Dendritic cell treated with granulocyte-macrophage colony-stimulating factor and Interleukin-4, amounts not matched to agents 40 ng/mL and 50 ng/mL, for 4 days (primary cell): ENCODE measurements at regions of chr1 and their contacts with region 1.

Region 1: GRCh38 chr1:108691942-108692723 is at the start of gene PRPF38B:
- H3K4me3 Mint-ChIP-seq: peak within 1 kb of the TSS; percentile 96
- H3K27ac Mint-ChIP-seq: peak within 1 kb of the TSS; percentile 100
- H3K4me1 Mint-ChIP-seq: peaks cover 21% of the 10 kb centered on the region
- H3K27me3 Mint-ChIP-seq: no peaks in the 10 kb centered on the region

Region 2: DNA sequence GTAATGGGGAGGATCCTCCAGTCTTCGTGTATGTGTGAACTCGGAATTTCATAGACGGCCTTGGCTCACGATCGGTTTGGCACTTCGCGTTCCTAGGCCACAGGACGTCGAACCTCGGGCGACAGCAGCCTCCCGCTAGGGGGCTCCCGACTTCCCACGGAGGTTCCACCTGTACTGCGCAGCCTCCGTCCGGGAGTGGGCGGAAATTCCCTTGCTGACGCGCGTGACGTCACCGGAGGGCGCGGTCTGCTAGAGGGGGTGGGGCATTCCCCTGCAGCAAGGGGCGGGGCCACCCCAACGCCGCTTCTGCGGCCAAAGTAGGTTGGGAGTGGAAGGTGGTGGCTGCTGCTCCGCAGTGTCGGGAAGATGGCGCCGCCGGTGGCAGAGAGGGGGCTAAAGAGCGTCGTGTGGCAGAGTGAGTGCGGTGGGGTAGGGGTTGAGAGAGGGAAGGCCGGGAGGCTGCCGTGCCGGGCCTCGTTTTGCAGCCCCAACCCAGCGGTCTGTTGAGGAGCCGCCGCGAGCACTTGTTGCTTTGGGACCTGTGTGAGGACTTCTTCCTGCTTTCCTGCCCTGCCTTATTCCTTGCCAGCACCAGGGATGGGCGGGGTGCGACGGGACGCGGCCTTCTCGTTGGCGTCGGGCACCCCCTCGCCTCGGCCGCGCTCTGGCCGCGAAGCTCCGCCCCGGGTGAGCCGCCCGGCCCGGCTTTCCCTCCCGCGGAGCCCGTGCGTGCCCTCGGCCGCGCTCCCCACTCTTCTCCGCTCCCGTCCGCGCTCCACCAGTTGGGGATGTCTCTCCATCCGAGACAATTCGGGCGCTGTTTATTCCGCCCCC is 54.5 kb after region 1 on chr1 and contains the start of gene STXBP3:
- intact Hi-C with region 1: loop called (anchors 2 kb)
- H3K4me3 Mint-ChIP-seq: peak within 1 kb of the TSS; percentile 91
- H3K27ac Mint-ChIP-seq: peak within 1 kb of the TSS; percentile 100
- H3K4me1 Mint-ChIP-seq: peaks cover 38% of the 10 kb centered on the region
- H3K27me3 Mint-ChIP-seq: peaks cover 2% of the 10 kb centered on the region